ENCODE measurements at regions of chr3 and their contacts with region 1.

Region 1: GRCh38 chr3:130759699-130760338 is 13.2 kb upstream of the PIK3R4 start:
- DNase-seq: peak; percentile 71
- H3K4me3 Mint-ChIP-seq: no peak overlapping the region
- H3K27ac Mint-ChIP-seq: no peak overlapping the region
- H3K4me1 Mint-ChIP-seq: peaks cover 5% of the 10 kb centered on the region
- H3K27me3 Mint-ChIP-seq: peaks cover 11% of the 10 kb centered on the region
- CTCF ChIP-seq: peak; percentile 81

Region 2: DNA sequence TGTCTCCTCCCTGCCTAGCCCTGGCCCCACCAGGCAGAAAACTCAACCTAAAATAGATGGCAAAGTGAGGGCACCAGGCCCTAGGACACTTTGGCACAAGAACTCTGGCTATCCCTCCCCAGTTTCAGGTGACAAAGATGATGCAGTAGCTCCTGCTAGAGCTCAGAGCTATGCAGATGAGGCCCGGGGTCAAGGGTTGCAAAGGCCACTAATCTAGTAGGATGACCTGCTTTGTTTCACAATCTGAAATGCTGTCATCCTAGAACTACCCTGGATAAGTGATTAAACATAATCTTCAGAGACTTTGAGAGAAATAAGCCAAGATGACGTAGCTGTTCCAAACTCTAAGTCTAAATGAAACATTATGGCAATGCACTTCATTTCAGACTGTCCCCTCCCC is 10.8 kb after region 1 on chr3:
- CTCF ChIA-PET with region 1: interaction called, 14 read pairs
- POLR2A ChIA-PET with region 1: no interaction called
- intact Hi-C with region 1: no loop called
- DNase-seq: no peak
- H3K4me3 Mint-ChIP-seq: no peak overlapping the region
- H3K27ac Mint-ChIP-seq: no peak overlapping the region
- H3K4me1 Mint-ChIP-seq: no peaks in the 10 kb centered on the region
- H3K27me3 Mint-ChIP-seq: peaks cover 38% of the 10 kb centered on the region
- CTCF ChIP-seq: no peak

Region 3: DNA sequence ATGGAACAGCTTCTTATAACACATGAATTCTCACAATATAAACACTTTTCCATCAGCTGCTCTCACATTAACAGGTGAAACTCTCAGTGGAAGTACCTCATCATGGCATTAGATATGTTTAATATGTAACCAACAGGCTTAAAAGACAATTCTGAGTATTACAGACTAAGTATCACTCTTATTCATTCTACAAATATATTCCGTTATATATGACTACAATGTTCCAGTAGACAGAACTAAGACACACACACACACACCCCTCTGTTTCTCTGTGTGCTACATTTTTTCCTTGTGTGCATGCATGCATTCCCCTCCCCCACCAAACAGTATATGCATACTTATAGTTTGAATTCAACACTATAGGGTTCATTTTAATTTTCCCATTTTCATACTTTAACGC is 710.6 kb after region 1 on chr3:
- CTCF ChIA-PET with region 1: no interaction called
- POLR2A ChIA-PET with region 1: no interaction called
- intact Hi-C with region 1: no loop called
- DNase-seq: no peak
- H3K4me3 Mint-ChIP-seq: no peak overlapping the region
- H3K27ac Mint-ChIP-seq: no peak overlapping the region
- H3K4me1 Mint-ChIP-seq: no peaks in the 10 kb centered on the region
- H3K27me3 Mint-ChIP-seq: no peaks in the 10 kb centered on the region
- CTCF ChIP-seq: no peak

Measured in MCF 10A (cell line).